Activated T-helper 2 cell treated with anti-CD3 and anti-CD28 coated beads, Interferon-gamma antibody, Interleukin-2, Interleukin-4, amounts not matched to agents 10 μg/mL and 5 μg/mL and 100 μg/mL, durations not matched to agents 14 hours and 24 hours and 36 hours (primary cell): ENCODE measurements at regions of chr18 and their contacts with region 1.

Region 1: GRCh38 chr18:46297621-46298020 is 193.4 kb downstream of the HAUS1 start:
- DNase-seq: peak; percentile 41
- H3K4me3 Mint-ChIP-seq: no peak overlapping the region
- H3K27ac Mint-ChIP-seq: no peak overlapping the region
- H3K4me1 Mint-ChIP-seq: peaks cover 19% of the 10 kb centered on the region
- H3K27me3 Mint-ChIP-seq: peaks cover 14% of the 10 kb centered on the region

Region 2: DNA sequence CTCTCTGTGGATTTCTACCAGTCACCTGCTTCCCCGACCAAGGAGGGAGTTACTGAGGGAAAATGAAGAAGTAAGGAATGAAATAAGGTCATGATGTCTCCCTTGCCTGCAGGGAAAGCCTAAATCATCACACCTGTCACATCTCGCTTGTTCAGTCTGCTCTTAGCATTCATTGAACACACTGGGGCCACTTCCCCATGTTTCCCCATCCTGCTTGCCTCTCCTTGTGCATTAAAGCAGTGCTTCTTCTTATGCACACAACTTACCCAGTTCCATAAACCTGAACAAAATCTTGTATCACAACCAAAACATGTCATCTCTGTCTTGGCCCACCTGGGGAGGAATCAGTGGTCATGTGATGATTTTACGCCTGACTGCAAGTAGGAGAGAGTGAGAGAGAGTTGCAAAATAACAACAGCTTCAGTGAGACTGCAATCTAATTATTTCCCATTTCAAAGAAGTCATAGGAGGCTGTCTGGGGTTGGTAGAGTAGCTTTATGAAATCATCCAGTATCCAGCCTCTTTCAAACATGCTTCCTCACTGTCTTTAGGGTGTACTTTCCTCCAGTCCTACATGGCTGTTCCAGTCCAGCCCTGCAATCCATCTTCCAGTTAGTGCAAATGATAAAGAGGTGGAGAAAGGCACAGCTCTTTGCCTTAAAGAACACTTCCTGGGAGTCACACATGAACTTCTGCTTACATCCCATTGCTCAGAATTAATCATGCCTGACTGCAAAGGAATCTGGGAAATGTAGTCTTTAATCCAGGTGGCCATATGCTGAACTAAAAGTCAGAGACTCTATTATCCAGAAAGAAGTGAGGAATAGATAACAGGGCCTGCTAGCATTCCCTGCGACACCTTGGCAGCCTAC is 26.7 kb after region 1 on chr18:
- intact Hi-C with region 1: no loop called
- DNase-seq: no peak
- H3K4me3 Mint-ChIP-seq: no peak overlapping the region
- H3K27ac Mint-ChIP-seq: no peak overlapping the region
- H3K4me1 Mint-ChIP-seq: peaks cover 6% of the 10 kb centered on the region
- H3K27me3 Mint-ChIP-seq: peaks cover 5% of the 10 kb centered on the region

Region 3: DNA sequence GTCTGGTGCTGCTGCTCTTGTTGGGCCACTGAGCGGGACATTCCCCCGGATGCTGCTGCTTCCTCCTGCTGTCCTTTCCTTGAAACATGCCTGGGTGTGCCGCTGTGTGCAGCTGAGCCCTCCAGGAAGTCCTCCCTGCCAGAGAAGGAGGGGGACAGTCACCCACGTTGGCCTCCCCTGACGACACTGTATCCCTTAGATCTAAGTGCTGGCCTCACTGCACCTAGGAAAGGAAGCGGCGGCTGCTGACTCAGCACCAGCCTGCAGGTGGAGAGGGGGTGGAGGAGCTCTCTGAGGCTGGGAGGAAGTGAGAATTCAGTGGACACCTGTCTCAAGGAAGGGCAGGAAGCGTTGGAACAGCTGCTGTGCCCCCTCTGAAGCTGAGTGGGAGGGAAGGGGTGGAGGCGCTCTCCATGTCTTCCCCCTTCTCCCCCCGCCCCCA is 46.3 kb after region 1 on chr18:
- intact Hi-C with region 1: loop called (anchors 1 kb)
- DNase-seq: peak; percentile 53
- H3K4me3 Mint-ChIP-seq: no peak overlapping the region
- H3K27ac Mint-ChIP-seq: peak overlapping the region; percentile 63
- H3K4me1 Mint-ChIP-seq: peaks cover 28% of the 10 kb centered on the region
- H3K27me3 Mint-ChIP-seq: peaks cover 6% of the 10 kb centered on the region

Region 4: DNA sequence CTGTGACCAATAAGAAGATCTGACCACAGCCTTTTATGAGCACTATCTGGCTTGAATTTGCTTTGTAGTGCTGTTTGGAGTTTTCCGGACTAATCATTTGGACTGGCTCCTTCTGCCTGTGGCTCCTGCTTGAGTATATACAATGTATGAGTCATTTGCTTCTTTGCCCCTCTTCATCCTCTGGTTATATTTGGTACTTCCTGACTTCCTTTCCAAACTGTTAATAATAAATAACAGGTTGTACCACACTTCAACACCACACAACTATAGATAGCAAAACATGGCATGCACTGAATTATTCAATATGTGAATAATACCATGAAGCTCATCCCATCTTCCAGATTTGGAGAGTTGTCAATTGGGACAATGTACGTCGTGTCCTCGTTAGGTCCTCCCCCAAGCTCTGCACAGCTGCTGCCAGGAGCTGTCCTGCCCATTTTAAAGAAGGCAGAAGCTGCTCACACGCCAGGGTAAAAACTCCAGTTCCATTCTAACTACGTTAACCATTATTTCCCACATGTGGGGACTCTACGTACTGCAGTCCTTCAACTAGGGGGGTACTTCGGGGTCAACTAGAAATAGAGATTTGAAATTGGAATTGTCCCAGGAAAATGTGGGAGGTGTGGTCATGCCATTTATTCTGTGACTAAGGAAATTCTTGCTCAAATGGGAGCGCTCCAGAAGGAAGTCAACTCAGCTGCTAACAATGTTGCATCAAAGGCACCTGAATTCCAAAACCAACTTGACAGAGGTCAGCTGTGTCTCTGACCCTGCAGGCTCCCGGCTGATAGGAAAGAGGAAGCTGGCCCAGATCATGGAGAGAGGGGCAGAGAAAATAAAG is 421.1 kb after region 1 on chr18:
- intact Hi-C with region 1: no loop called
- DNase-seq: no peak
- H3K4me3 Mint-ChIP-seq: no peak overlapping the region
- H3K27ac Mint-ChIP-seq: no peak overlapping the region
- H3K4me1 Mint-ChIP-seq: no peaks in the 10 kb centered on the region
- H3K27me3 Mint-ChIP-seq: peaks cover 1% of the 10 kb centered on the region